Psoas muscle (tissue), 8 donors: ENCODE measurements at regions of chr6 and their contacts with region 1.

Region 1: GRCh38 chr6:29685718-29686326 is 4.9 kb upstream of the ZFP57 start:
- DNase-seq: no peak
- ATAC-seq: no peak
- H3K4me3 ChIP-seq: no peak overlapping the region
- H3K27ac ChIP-seq: no peak overlapping the region
- H3K4me1 ChIP-seq: no peaks in the 10 kb centered on the region
- H3K27me3 ChIP-seq: no peaks in the 10 kb centered on the region
- CTCF ChIP-seq: no peak

Region 2: DNA sequence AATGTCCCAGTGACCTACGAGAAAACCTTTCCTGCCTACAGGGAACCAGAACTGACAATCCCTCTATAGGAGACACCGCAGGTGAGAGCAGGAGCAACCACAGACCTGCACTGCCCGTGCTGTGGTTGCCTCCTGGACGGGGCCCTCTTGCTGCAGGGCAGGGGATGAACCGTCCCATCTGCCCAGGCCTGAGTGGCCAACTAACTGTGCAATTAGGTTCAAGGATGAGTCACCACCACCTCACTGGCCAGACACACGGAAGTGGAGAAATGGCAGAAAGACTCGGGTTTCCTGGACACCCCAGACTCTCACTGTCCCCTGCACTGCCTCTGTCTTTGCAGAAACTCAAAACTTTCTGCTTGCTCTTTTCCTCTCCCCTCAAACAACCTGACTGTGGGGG is 128.0 kb after region 1 on chr6:
- intact Hi-C with region 1: loop called in 1 of 2 experiments (anchors 5 kb)
- DNase-seq: no peak
- ATAC-seq: no peak
- H3K4me3 ChIP-seq: no peak overlapping the region
- H3K27ac ChIP-seq: no peak overlapping the region
- H3K4me1 ChIP-seq: no peaks in the 10 kb centered on the region
- H3K27me3 ChIP-seq: peaks cover 0 to 6% (median 4%) of the 10 kb centered on the region in 3 donors
- CTCF ChIP-seq: no peak

Region 3: DNA sequence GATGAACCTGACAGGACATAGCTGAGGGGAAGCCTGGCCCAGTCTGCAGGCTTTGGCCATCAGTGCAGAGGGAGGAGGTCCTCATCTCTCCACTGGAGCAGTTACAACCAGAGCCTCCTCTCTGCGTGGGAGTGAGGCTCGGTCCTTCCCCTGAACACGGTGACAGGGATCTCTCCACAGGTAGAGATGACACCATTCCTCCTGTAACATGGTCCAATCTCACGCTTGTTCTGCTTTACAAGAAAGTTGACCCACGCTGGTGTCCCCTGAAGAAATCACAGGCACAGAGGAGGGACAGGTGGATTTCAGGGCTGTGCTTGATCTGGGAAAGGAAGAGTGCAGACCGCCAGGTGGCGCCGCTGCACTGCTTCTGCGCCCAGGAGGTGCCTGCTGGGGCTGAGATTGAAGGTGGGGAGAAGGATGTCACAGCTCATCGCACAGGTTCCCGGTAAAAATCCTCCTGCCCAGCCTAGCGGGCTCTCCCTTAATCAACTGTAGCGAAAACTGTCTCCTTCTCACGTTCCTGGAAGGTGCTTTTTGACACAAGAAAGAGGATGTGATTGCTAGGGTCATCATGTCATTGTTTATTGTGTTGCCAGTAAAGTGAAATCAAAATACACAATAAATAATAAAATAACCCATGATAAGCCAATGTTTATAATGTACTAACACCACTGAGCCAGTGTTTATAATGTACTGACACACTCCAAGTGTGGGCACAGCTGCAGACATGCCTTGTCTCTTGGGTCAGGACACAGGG is 162.2 kb after region 1 on chr6:
- intact Hi-C with region 1: no loop called
- DNase-seq: peak; percentile 78 to 87
- ATAC-seq: peak; percentile 91 to 99 (median 95)
- H3K4me3 ChIP-seq: no peak overlapping the region
- H3K27ac ChIP-seq: no peak overlapping the region
- H3K4me1 ChIP-seq: no peaks in the 10 kb centered on the region
- H3K27me3 ChIP-seq: peaks cover 2 to 54% (median 5%) of the 10 kb centered on the region in 3 donors
- CTCF ChIP-seq: peak; percentile 99

Region 4: GRCh38 chr6:29965873-29966601 is 280.2 kb after region 1 on chr6:
- intact Hi-C with region 1: no loop called
- DNase-seq: peak; percentile 86 to 90
- ATAC-seq: peak; percentile 83 to 90 (median 84)
- H3K4me3 ChIP-seq: peak overlapping the region; percentile 88
- H3K27ac ChIP-seq: peak overlapping the region; percentile 98
- H3K4me1 ChIP-seq: peaks cover 28% of the 10 kb centered on the region
- H3K27me3 ChIP-seq: no peaks in the 10 kb centered on the region
- CTCF ChIP-seq: no peak

Region 5: DNA sequence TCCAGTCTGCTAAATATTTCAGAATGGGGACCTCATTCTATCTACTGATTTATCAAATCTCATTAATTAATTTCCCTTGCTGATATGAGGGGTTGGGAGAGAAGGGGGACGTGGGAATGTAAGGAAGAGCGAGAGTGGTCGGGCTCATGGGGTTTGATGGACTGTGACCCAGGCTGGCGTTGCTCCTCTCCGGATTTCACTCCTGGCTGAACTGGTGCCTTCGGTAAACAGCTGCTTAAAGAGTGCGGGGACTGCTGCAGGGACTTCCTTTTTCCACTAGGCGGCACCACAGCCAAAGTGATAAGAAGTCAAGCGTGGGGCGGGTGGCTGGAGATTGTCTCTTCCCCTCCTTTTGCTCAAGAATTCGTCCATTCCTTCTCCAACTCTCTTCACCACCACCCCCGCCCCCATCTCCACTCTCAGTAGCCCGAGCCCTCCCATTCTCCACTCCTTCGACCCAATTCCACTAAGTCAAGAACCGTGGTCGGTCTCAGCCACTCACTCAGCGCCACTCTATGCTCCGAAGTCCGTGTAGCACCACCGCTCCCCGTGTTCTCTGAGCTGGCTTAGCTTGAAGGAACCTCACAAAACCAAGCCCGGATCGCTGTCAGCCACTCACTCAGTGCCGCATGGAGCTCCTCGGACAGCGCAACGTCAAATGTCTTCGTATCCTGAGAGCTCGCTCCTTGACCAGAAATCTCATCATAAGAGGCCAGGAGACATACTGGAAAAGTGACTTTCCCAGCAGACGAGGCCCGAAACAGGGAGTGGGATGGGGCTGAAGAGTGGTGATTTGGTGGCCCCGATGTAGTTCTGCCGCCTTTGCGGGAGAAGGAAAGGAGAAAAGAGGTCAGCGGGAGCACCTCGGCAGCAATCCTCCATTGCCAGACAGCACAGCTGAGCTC is 417.4 kb after region 1 on chr6:
- intact Hi-C with region 1: no loop called
- DNase-seq: peak; percentile 84 to 90
- ATAC-seq: peak; percentile 82 to 92 (median 88)
- H3K4me3 ChIP-seq: peak overlapping the region; percentile 61
- H3K27ac ChIP-seq: peak overlapping the region; percentile 71
- H3K4me1 ChIP-seq: peaks cover 24% of the 10 kb centered on the region
- H3K27me3 ChIP-seq: peaks cover 0 to 44% (median 11%) of the 10 kb centered on the region in 3 donors
- CTCF ChIP-seq: peak; percentile 85